Gastrocnemius medialis (tissue), 4 donors: ENCODE measurements at regions of chr12 and their contacts with region 1.

Region 1: GRCh38 chr12:94139816-94140215 is 8.6 kb upstream of the PLXNC1 start:
- DNase-seq: no peak
- ATAC-seq: no peak
- H3K4me3 ChIP-seq: no peak overlapping the region
- H3K27ac ChIP-seq: no peak overlapping the region
- H3K4me1 ChIP-seq: no peaks in the 10 kb centered on the region
- H3K27me3 ChIP-seq: no peaks in the 10 kb centered on the region
- CTCF ChIP-seq: no peak
- POLR2A ChIP-seq: no peak

Region 2: DNA sequence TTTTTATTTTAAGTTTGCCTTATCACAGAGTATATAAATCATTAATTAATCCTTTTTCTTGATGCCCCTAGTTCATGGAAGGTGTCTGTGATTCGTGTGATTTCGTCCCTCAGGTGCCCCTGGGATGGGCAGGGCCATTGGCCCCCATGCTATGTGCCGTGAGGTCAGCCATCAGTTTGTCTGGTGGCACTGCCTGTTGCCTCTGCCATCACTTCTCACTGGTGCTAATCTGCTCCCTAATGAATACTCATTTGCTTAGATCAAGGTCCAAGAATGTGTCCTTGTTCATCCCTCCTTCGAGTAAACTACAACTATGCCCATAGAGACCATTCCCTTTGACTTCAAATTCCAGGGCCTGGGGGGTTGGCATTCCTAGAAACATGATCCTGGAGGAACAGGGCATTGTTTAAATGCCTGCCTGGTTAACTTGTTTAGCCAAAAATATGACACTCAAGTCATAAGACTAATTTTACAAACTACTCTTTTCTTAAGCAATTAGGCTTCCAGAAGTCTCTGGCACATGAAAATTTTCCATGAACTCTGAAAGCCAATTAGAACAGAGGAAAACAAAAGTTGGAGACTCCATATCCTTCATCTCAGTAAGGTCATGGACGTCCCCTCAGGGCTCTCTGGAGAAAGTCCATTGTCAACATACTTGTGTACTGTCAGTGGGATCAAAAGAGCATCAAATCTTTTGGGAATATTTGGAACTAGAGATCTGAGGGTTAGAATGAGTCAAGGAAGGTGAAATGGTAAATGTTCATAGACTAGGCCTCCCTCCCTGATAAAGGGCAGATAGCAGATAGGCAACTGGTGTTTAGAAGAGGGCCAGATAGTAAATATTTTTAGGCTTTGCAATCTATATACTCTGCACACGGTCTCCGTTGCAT is 82.3 kb before region 1 on chr12:
- in situ Hi-C with region 1: no loop called
- intact Hi-C with region 1: no loop called
- DNase-seq: no peak
- ATAC-seq: no peak
- H3K4me3 ChIP-seq: no peak overlapping the region
- H3K27ac ChIP-seq: no peak overlapping the region
- H3K4me1 ChIP-seq: peaks cover 0 to 3% of the 10 kb centered on the region in 2 donors
- H3K27me3 ChIP-seq: no peaks in the 10 kb centered on the region
- CTCF ChIP-seq: no peak
- POLR2A ChIP-seq: no peak

Region 3: GRCh38 chr12:94525951-94526350 is 386.1 kb after region 1 on chr12:
- in situ Hi-C with region 1: loop called in 3 of 4 experiments (anchors 5 kb)
- intact Hi-C with region 1: loop called (anchors 5 kb)
- DNase-seq: no peak
- ATAC-seq: no peak
- H3K4me3 ChIP-seq: no peak overlapping the region
- H3K27ac ChIP-seq: no peak overlapping the region
- H3K4me1 ChIP-seq: no peaks in the 10 kb centered on the region
- H3K27me3 ChIP-seq: no peaks in the 10 kb centered on the region
- CTCF ChIP-seq: no peak
- POLR2A ChIP-seq: no peak